ENCODE measurements at regions of chr12 and their contacts with region 1.

Region 1: DNA sequence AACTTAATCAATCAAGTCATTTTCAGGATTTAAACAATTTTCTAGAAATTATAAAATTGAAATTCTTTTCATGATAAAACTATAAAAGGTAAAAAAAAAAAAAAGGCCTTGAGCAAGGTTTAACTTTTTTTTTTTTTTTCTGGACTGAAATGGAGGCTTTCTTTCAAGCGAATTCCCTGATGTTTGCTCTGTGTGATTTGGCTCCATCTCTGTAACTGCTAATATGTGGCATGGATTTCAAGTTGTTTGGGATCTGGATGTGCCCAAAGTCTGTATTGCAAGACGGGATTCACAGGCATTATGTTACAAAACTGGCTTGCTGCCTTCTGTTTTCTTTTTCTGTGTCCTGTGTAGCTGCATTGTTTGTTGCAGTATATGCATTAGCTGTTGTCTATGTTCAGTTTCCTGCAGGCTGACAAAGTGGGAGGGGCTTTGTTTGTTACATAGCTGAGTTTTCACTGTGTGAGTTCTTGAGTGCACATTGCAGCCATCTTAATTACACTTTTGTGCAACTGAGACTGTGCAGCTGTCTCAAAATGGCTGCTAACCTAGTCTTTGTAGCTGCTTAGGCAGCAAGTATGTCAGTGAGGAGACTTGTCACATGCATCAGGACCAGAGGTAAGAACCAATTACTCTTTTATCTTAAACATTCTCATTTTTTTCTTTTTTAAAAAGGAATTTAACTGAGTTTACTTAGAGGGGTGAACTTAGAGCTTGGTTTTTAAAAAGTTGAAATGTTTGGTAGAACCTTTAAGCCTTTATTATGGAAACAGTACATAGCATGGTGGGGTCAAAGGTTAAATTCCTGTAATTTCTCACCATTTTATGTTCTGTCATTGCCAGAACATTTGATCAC is 19.5 kb downstream of the ATF7IP start:
- DNase-seq: no peak
- ATAC-seq: peak; percentile 90 to 97 (median 96)
- H3K4me3 ChIP-seq: peak overlapping the region; percentile 52
- H3K27ac ChIP-seq: peak overlapping the region; percentile 48
- H3K4me1 ChIP-seq: peaks cover 3% of the 10 kb centered on the region
- H3K27me3 ChIP-seq: no peaks in the 10 kb centered on the region
- CTCF ChIP-seq: no peak

Region 2: DNA sequence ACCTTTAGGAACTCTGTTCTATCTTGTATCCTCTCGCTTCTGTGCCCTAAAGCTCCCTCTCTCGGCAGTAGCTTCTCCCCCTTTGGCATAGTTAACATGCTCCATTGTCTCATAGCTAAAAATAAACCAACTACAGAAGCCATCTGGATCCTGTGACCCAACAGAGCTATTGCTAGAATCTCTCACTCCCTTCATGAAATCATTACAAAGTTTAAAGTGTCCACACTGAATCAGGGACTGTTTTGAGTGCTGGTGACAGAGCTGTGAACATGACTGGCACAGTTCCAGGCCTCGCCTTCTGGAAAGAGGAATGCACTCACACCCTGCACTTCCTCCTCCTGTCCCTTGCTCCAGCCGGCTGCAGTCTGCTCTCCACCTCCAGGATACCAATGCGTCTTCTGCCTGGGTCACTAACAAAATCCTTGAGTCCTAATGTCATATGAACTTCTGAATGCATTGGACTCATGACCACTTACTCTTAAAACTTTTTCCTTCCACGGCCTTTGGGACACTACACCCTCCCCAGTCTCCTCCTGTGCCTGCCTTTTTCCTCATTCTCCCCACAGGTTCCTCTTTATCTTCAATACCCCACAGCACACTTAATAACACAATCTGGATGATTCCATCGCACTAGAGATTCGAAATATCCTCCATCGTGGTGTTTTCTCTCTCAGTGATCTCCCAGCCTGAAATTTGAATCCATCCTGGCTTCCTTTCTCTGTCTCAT is 169.4 kb after region 1 on chr12:
- intact Hi-C with region 1: loop called in 1 of 2 experiments (anchors 10 kb)
- DNase-seq: peak; percentile 81 to 94
- ATAC-seq: peak; percentile 95 to 97 (median 96)
- H3K4me3 ChIP-seq: peak overlapping the region; percentile 40
- H3K27ac ChIP-seq: peak overlapping the region; percentile 83
- H3K4me1 ChIP-seq: peaks cover 13% of the 10 kb centered on the region
- H3K27me3 ChIP-seq: no peaks in the 10 kb centered on the region
- CTCF ChIP-seq: peak; percentile 19

Measured in psoas muscle (tissue), 8 donors.